ENCODE measurements at regions of chr5 and their contacts with region 1.

Region 1: DNA sequence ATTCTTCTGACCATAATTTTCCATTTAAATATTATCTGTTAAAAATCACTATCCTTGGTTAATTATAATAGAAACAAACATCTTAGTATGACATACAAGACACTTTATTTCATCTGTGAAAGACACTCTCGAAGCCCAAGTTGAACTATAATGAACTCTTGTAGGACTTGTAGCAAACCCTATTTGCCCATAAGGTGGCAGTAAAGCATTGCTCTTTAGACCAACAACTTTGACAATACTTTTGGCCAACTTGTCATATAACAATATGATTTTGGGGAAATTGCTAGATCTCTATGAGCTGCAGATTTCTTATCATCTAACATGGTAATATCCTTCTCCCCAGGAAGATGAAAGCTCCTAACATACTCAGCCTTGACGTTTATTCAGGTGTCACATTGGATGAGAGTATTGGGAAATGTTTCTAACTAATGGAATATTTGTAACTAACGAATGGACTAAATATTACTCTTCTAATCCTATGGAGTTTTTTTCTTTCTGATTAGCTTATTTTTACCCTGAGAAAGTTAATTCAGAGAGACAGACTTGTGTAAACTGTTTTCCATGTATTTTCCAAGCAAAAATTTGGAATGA is 11.0 kb downstream of the SPINK14 start:
- DNase-seq: peak; percentile 71 to 87 (median 84)
- H3K4me3 ChIP-seq: no peak overlapping the region
- H3K27ac ChIP-seq: no peak overlapping the region
- H3K4me1 ChIP-seq: no peaks in the 10 kb centered on the region
- H3K27me3 ChIP-seq: no peaks in the 10 kb centered on the region

Region 2: GRCh38 chr5:148374692-148375360 is 195.5 kb after region 1 on chr5:
- CTCF ChIA-PET with region 1: interaction called, 27 read pairs
- POLR2A ChIA-PET with region 1: no interaction called
- DNase-seq: peak; percentile 38 to 63 (median 58)
- H3K4me3 ChIP-seq: no peak overlapping the region
- H3K27ac ChIP-seq: no peak overlapping the region
- H3K4me1 ChIP-seq: peaks cover 0 to 4% (median 0%) of the 10 kb centered on the region in 4 experiments
- H3K27me3 ChIP-seq: no peaks in the 10 kb centered on the region

Region 3: GRCh38 chr5:148443998-148444397 is 264.7 kb after region 1 on chr5:
- CTCF ChIA-PET with region 1: interaction called, 21 read pairs
- POLR2A ChIA-PET with region 1: no interaction called
- DNase-seq: peak; percentile 65 to 83 (median 80)
- H3K4me3 ChIP-seq: no peak overlapping the region
- H3K27ac ChIP-seq: no peak overlapping the region
- H3K4me1 ChIP-seq: no peaks in the 10 kb centered on the region
- H3K27me3 ChIP-seq: no peaks in the 10 kb centered on the region